ENCODE measurements at regions of chr2 and their contacts with region 1.

Region 1: DNA sequence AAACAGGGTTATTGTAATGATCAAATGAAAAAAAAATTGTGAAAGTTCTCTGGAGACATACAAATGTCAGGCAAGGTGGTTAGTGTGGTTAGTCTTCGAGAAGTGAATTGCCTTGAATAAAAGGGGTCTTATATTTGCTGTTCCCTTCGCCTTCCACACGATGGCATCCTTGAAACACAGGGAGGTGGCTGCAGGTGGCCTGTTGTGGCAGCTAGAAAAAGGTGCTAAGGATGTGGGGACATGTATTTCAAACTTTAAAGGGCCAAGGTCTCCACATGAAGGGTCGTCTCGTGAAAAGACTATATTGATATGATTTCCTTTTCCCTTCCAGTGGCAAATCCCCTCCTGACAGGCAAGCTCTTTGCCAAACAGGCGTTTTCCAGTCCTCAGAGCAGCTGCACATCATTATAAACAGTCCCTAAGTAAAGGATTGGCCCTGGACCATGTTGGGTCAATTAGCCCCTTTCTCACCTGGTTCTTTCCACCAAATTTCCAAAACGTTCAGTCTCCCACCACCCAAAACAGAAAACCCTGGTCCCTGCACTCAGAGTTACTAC is 68.5 kb downstream of the COPS8 start:
- DNase-seq: peak; percentile 76
- H3K4me3 ChIP-seq: no peak overlapping the region
- H3K27ac ChIP-seq: no peak overlapping the region
- H3K4me1 ChIP-seq: peaks cover 12% of the 10 kb centered on the region
- H3K27me3 ChIP-seq: no peaks in the 10 kb centered on the region
- CTCF ChIP-seq: peak; percentile 82

Region 2: GRCh38 chr2:236562434-236562833 is 591.7 kb before region 1 on chr2:
- CTCF ChIA-PET with region 1: no interaction called
- POLR2A ChIA-PET with region 1: no interaction called
- intact Hi-C with region 1: no loop called
- DNase-seq: peak; percentile 25
- H3K4me3 ChIP-seq: no peak overlapping the region
- H3K27ac ChIP-seq: no peak overlapping the region
- H3K4me1 ChIP-seq: peaks cover 5% of the 10 kb centered on the region
- H3K27me3 ChIP-seq: peaks cover 17% of the 10 kb centered on the region
- CTCF ChIP-seq: peak; percentile 57

Region 3: GRCh38 chr2:236976266-236977062 is 177.7 kb before region 1 on chr2:
- CTCF ChIA-PET with region 1: no interaction called
- POLR2A ChIA-PET with region 1: no interaction called
- intact Hi-C with region 1: no loop called
- DNase-seq: no peak
- H3K4me3 ChIP-seq: no peak overlapping the region
- H3K27ac ChIP-seq: no peak overlapping the region
- H3K4me1 ChIP-seq: no peaks in the 10 kb centered on the region
- H3K27me3 ChIP-seq: peaks cover 12% of the 10 kb centered on the region
- CTCF ChIP-seq: no peak

Region 4: DNA sequence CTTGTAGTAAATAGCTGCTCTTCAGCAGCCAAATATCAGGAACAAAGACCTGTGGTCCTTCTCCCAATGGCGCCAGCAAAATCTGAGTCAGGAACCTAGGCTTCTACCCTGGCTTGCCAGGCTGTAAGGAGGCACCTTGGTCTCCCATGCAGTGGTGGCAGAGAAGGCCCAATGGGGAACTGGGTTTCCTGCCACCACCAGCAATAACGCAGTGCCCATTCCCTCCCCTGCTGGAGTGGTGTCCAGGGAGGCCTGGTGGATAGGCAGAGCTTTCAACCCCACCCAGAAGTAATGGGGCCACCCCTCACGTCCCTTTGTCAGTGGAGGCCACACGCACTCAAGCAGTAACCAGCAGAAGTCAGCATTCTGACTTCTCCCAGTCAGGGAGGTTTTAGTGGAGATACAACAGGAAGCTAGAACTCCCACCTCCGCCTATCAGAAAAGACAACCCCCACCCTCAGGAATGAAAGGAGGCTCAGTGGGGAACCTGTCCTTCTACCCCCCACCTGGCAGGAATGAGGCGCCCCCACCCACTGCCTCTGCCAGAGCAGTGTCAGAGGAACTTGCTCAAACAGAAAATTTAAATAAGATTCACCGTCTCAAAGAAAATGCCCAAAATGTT is 63.9 kb after region 1 on chr2:
- CTCF ChIA-PET with region 1: interaction called, 13 read pairs
- POLR2A ChIA-PET with region 1: no interaction called
- intact Hi-C with region 1: no loop called
- DNase-seq: peak; percentile 80
- H3K4me3 ChIP-seq: no peak overlapping the region
- H3K27ac ChIP-seq: peak overlapping the region; percentile 76
- H3K4me1 ChIP-seq: peaks cover 35% of the 10 kb centered on the region
- H3K27me3 ChIP-seq: no peaks in the 10 kb centered on the region
- CTCF ChIP-seq: no peak

Region 5: DNA sequence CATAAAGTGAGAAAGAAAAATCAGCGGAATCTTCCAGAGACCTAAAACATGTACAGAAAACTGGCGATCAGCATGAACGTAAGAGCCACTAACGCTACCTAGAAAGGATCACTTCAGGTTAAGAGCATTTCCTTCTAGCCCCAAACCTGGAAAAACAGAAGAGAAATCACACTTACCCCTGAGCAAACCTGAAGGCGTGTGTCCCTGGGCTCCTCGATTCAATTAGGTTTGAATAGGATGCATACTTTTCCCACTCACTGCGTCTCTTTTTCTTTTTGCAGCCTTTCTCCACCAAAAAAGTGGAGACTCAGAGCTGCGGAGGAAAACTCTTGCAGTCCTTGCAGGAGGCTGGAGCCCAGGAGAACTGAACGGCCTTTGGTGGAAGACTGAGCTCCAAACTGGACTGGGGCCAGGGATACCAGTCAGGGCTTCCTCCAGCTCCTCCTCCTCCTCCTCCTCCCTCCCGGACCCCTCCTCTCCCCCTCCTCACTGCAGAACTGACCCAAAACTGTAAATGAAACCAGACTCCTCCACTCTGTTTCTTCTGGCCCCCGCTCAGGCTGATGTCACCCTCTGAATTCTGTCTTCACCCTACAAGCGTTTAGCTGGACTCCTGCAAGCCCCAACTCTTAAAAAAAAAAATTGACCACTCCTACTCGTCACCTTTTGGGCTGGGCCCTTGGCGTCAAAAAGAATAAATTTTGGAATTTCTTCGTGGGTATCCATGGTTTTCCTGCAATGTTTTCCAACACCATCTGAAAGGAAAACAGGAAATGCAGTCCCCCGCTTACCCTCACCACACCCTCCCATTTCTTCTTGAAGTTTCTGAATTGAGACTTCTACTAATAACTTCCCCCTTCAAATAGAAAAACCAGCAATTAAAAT is 259.9 kb after region 1 on chr2 and contains the start of gene COL6A3:
- CTCF ChIA-PET with region 1: interaction called, 4 read pairs
- POLR2A ChIA-PET with region 1: no interaction called
- intact Hi-C with region 1: loop called (anchors 2 kb)
- DNase-seq: no peak
- H3K4me3 ChIP-seq: no peak within 1 kb of the TSS
- H3K27ac ChIP-seq: no peak within 1 kb of the TSS
- H3K4me1 ChIP-seq: no peaks in the 10 kb centered on the region
- H3K27me3 ChIP-seq: peaks cover 30% of the 10 kb centered on the region
- CTCF ChIP-seq: no peak
- total RNA-seq, gene COL6A3: 0.86 and 2.2 TPM in 2 replicates

Region 6: DNA sequence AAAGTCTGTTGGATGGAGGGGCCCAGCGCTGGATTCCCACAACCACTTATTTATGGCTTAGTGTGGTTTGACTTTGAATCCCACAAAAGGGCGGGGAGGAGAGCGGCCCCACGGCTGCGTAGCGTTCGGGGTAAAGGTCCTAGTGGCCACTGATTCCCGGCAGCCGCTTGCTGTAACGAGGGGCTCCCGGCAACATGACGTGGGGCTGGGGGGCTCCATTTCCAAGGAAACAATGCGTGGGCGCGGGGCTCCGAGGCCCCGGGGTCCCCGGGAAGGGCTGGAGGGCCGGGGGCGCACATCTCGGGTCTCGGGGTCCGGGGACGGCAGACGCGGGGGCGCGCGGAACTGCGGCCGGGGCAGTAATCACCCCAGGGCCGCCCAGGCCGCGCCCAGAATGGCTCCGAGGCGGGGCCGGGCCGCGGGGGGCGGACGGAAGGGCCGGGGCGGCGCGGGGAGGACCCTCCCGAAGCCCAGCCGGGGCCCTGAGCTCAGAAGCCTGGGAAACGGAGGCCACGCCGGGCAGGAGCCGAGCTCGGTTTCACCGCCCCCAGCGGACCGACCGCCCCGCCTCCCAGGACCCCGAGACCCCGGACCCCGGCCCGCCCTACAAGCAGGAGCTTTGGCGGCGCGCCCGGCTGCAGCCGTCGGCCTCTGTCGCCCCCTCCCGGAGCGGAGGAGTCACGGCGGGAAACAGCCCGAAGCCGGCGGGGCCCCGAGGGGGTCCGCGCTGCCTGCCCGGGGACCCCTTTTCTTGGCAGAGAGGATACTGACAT is 321.0 kb after region 1 on chr2:
- CTCF ChIA-PET with region 1: no interaction called
- POLR2A ChIA-PET with region 1: no interaction called
- intact Hi-C with region 1: loop called (anchors 5 kb)
- DNase-seq: peak; percentile 80
- H3K4me3 ChIP-seq: peak overlapping the region; percentile 75
- H3K27ac ChIP-seq: peak overlapping the region; percentile 85
- H3K4me1 ChIP-seq: peaks cover 6% of the 10 kb centered on the region
- H3K27me3 ChIP-seq: peaks cover 42% of the 10 kb centered on the region
- CTCF ChIP-seq: peak; percentile 83

Region 7: GRCh38 chr2:237512774-237513466 is 358.8 kb after region 1 on chr2:
- CTCF ChIA-PET with region 1: no interaction called
- POLR2A ChIA-PET with region 1: no interaction called
- intact Hi-C with region 1: loop called (anchors 1 kb)
- DNase-seq: peak; percentile 90
- H3K4me3 ChIP-seq: no peak overlapping the region
- H3K27ac ChIP-seq: no peak overlapping the region
- H3K4me1 ChIP-seq: no peaks in the 10 kb centered on the region
- H3K27me3 ChIP-seq: peaks cover 7% of the 10 kb centered on the region
- CTCF ChIP-seq: peak; percentile 97

Region 8: GRCh38 chr2:237572021-237572741 is 418.0 kb after region 1 on chr2:
- CTCF ChIA-PET with region 1: interaction called, 12 read pairs
- POLR2A ChIA-PET with region 1: no interaction called
- intact Hi-C with region 1: loop called (anchors 1 kb)
- DNase-seq: peak; percentile 92
- H3K4me3 ChIP-seq: no peak overlapping the region
- H3K27ac ChIP-seq: no peak overlapping the region
- H3K4me1 ChIP-seq: no peaks in the 10 kb centered on the region
- H3K27me3 ChIP-seq: no peaks in the 10 kb centered on the region
- CTCF ChIP-seq: peak; percentile 99

Region 9: GRCh38 chr2:237662671-237663093 is 508.5 kb after region 1 on chr2:
- CTCF ChIA-PET with region 1: no interaction called
- POLR2A ChIA-PET with region 1: no interaction called
- intact Hi-C with region 1: no loop called
- DNase-seq: peak; percentile 93
- H3K4me3 ChIP-seq: no peak overlapping the region
- H3K27ac ChIP-seq: no peak overlapping the region
- H3K4me1 ChIP-seq: peaks cover 18% of the 10 kb centered on the region
- H3K27me3 ChIP-seq: no peaks in the 10 kb centered on the region
- CTCF ChIP-seq: no peak